Heart right ventricle (tissue), 16 donors: ENCODE measurements at regions of chr16 and their contacts with region 1.

Region 1: GRCh38 chr16:89700100-89700648 is 1.3 kb downstream of the SPATA2L start:
- DNase-seq: peak; percentile 98 to 99
- ATAC-seq: peak; percentile 73 to 92 (median 82)
- H3K4me3 ChIP-seq: peak overlapping the region; percentile 59 to 78 (median 74)
- H3K27ac ChIP-seq: peak overlapping the region; percentile 1 to 85 (median 75)
- H3K4me1 ChIP-seq: peaks cover 10 to 34% (median 26%) of the 10 kb centered on the region in 9 donors
- H3K27me3 ChIP-seq: no peaks in the 10 kb centered on the region
- CTCF ChIP-seq: peak; percentile 42 to 81 (median 69)

Region 2: GRCh38 chr16:89656435-89657135 is 43.6 kb before region 1 on chr16:
- intact Hi-C with region 1: no loop called
- DNase-seq: no peak
- ATAC-seq: no peak
- H3K4me3 ChIP-seq: peak overlapping the region; percentile 84 to 100 (median 98)
- H3K27ac ChIP-seq: peak overlapping the region in 5 of 10 donors; percentile 85 to 98 (median 91)
- H3K4me1 ChIP-seq: peaks cover 9 to 31% (median 20%) of the 10 kb centered on the region in 9 donors
- H3K27me3 ChIP-seq: no peaks in the 10 kb centered on the region
- CTCF ChIP-seq: no peak

Region 3: DNA sequence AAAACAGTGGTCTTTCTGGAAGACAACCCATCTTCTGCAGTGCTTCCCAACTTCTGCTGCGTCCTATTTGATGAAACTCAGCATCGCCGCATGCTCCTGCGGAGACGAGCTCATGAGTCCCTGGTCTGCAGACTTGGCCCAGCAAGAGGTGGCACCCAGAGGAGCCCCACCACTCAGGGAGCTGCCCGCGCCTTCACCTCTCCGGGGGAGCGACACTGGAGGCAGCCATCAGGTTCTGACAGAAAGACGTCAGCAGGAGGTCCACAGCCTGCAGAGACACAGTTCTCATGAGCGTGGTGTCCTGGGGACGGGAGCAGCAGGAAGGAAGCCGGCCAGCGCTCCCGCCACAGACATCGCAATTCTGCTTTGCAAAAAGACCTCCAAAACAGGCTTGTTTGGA is 70.2 kb after region 1 on chr16:
- intact Hi-C with region 1: no loop called
- DNase-seq: no peak
- ATAC-seq: no peak
- H3K4me3 ChIP-seq: no peak overlapping the region
- H3K27ac ChIP-seq: no peak overlapping the region
- H3K4me1 ChIP-seq: peaks cover 0 to 2% (median 0%) of the 10 kb centered on the region in 9 donors
- H3K27me3 ChIP-seq: no peaks in the 10 kb centered on the region
- CTCF ChIP-seq: no peak

Region 4: DNA sequence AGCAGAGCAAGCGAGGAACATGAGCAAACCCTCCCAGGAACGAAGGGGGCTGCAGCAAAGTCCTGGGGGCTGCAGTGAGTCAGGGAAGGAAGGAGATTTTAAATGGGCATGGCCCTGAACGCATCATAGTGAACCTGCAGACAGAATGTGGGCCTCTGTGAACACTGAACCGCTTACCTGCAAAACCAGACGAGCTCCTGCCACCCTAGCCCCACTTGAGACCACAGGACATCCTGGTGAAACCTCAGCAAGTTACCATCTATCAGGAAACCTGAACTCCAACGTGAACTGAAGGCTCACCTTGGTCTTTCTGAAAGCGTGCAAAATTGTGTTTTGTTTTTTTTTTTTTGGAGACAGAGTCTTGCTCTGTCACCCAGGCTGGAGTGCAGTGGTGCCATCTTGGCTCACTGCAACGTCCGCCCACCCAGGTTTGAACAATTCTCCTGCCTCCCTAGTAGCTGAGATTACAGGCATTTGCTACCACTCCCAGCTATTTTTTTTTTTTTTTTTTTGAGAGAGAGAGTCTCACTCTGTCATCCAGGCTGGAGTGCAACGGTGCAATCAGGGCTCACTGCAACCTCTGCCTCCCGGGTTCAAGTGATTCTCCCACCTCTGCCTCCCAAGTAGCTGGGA is 85.5 kb after region 1 on chr16:
- intact Hi-C with region 1: loop called in 8 of 10 experiments (anchors 5 to 10 kb)
- DNase-seq: no peak
- ATAC-seq: no peak
- H3K4me3 ChIP-seq: no peak overlapping the region
- H3K27ac ChIP-seq: no peak overlapping the region
- H3K4me1 ChIP-seq: peaks cover 0 to 6% (median 0%) of the 10 kb centered on the region in 9 donors
- H3K27me3 ChIP-seq: no peaks in the 10 kb centered on the region
- CTCF ChIP-seq: no peak

Region 5: DNA sequence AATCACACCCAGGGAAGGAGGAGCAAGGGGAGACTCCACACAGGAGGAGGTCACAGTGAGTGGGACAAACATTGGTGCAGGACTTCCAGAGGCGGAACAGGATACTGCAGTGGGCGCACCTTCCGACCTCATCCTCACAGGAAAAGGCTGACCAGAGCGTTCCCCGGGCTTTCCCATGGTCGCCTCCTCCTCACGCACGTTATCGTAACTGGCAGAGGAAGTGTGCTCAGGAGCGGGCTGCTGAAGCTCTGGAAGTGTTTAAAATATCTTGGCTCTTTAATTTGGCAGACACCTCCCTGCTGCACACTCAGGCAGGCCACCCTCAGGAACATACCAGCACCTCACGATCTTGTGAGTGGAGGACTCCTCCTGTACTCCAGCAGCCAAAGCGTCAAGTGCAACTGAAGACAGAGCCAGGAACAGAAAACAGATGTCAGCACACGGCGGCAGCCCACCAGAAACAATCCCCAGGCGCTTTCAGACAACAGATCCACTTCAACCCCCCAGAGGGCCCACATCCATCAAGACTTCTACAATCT is 98.7 kb after region 1 on chr16:
- intact Hi-C with region 1: loop called in 8 of 10 experiments (anchors 5 kb)
- DNase-seq: peak; percentile 19 to 36
- ATAC-seq: peak; percentile 65 to 90 (median 86)
- H3K4me3 ChIP-seq: peak overlapping the region in 5 of 10 donors; percentile 0 to 26 (median 22)
- H3K27ac ChIP-seq: peak overlapping the region in 6 of 10 donors; percentile 39 to 72 (median 52)
- H3K4me1 ChIP-seq: peaks cover 0 to 14% (median 9%) of the 10 kb centered on the region in 9 donors
- H3K27me3 ChIP-seq: no peaks in the 10 kb centered on the region
- CTCF ChIP-seq: no peak

Region 6: DNA sequence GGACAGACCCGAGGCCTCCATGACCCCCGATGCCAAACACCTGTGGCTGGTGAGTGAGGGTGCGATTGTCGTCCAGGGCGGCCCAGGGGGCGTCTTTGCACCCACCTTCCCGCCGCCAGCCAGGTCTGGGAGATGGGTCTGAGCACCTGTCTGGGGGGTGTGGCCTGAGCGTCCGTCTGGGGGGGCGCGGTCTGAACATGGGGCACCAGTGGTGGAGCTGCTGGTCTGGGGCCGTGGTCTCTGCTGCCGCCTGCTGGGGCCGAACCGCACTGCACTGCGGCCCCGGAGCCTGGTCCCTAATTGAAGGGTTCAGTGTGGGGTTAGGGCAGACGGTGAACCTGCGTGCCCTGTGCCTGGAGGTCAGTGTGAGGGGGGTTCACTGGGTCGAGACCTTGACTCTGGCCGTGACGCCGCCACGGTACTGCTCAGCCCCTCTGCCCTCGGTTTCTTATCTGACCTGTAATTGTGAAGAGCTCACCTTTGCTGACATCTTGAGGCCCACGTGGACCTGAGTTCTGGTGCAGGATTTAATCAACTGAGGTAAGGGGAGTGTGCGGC is 160.7 kb after region 1 on chr16:
- intact Hi-C with region 1: loop called in 5 of 10 experiments (anchors 1 to 10 kb)
- DNase-seq: peak; percentile 49 to 71
- ATAC-seq: peak; percentile 64 to 81 (median 78)
- H3K4me3 ChIP-seq: no peak overlapping the region
- H3K27ac ChIP-seq: no peak overlapping the region
- H3K4me1 ChIP-seq: peaks cover 0 to 32% (median 21%) of the 10 kb centered on the region in 9 donors
- H3K27me3 ChIP-seq: no peaks in the 10 kb centered on the region
- CTCF ChIP-seq: peak; percentile 91 to 98 (median 96)

Region 7: DNA sequence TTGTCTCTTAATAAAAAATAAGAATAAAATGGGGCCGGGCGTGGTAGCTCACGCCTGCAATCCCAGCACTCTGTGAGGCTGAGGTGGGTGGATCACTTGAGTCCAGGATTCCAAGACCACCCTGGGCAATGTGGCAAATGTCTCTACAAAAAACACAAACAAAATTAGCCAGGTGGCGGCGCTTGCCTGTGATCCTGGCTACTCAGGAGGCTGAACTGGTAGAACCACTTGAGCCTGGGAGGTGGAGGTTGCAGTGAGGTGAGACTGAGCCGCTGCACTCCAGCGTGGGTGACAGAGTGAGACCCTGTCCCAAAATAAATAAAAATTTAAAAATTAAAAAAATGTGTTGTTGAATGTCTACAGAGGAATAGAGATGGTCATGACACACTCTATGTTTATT is 245.5 kb after region 1 on chr16:
- intact Hi-C with region 1: no loop called
- DNase-seq: no peak
- ATAC-seq: no peak
- H3K4me3 ChIP-seq: no peak overlapping the region
- H3K27ac ChIP-seq: no peak overlapping the region
- H3K4me1 ChIP-seq: peaks cover 0 to 21% (median 15%) of the 10 kb centered on the region in 9 donors
- H3K27me3 ChIP-seq: peaks cover 0 to 23% (median 6%) of the 10 kb centered on the region in 7 donors
- CTCF ChIP-seq: no peak

Region 8: GRCh38 chr16:90057738-90058173 is 357.6 kb after region 1 on chr16:
- intact Hi-C with region 1: no loop called
- DNase-seq: no peak
- ATAC-seq: no peak
- H3K4me3 ChIP-seq: no peak overlapping the region
- H3K27ac ChIP-seq: no peak overlapping the region
- H3K4me1 ChIP-seq: no peaks in the 10 kb centered on the region
- H3K27me3 ChIP-seq: peaks cover 0 to 10% (median 0%) of the 10 kb centered on the region in 7 donors
- CTCF ChIP-seq: no peak